Motor neuron (in vitro differentiated cells): ENCODE measurements at regions of chr16 and their contacts with region 1.

Region 1: DNA sequence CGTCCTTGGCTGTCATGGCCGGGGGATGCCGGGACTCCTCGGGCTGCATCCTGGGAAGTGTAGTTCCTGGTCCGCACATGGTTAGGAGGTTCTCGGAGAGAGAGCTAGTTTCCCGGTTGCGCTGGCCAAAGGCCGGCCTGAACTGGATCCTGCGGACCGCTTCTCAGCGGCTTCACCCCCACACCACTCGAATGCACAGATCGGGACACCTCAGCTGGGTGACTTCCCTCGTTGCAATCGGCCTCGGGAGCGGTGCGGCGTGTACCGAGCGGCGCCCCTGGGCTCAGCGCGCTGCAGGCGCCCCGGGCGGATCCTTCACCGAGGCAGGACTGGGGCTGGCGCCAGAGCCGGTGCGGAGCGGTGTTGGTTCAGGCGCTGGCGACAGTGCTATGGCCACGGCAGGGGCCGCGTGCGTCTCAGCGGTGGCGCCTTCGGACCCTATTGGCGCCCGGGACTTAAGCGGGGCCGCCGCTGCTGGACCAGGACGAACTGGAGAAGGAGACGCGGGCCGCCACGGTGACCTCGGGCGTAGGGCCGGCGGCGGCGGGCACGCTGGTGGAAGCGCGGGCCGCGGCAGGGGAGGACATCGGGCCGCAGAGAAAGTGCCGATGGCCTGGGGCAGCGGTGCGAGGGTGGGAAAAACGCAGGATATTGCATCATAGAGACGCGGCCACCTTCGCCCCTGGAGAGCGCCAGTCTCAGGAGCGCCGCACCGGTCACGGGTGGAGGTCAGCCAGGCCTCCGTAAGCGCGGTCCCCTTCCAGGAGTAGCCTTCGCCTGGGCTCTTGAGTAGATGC is 11.4 kb downstream of the ZNF629 start:
- ATAC-seq: peak; percentile 71 to 91 (median 88)
- H3K4me3 ChIP-seq: peak overlapping the region; percentile 50 to 62 (median 59)
- H3K27ac ChIP-seq: peak overlapping the region; percentile 89 to 94
- H3K4me1 ChIP-seq: peaks cover 20 to 22% of the 10 kb centered on the region in 2 donors

Region 2: DNA sequence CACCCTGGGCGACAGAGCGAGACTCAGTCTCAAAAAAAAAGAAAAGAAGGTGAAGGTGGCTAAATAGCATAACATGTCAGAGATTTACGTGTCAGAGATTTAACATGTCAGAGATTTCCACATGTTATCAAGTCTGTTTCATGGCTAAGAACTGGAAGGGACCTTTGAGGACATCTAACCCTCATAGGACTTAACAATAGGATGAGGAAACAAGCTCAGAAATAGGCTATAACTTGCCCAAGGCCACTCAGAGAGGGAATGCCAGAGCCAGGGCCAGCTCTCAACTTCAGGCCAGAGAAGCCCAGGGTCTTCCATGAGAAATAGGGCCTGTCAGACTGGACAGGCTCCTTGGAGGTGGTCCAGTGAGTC is 38.2 kb after region 1 on chr16:
- in situ Hi-C with region 1: no loop called
- ATAC-seq: no peak
- H3K4me3 ChIP-seq: peak overlapping the region; percentile 8 to 20 (median 10)
- H3K27ac ChIP-seq: peak overlapping the region in 1 of 2 donors; percentile 56
- H3K4me1 ChIP-seq: peaks cover 4 to 5% of the 10 kb centered on the region in 2 donors

Region 3: DNA sequence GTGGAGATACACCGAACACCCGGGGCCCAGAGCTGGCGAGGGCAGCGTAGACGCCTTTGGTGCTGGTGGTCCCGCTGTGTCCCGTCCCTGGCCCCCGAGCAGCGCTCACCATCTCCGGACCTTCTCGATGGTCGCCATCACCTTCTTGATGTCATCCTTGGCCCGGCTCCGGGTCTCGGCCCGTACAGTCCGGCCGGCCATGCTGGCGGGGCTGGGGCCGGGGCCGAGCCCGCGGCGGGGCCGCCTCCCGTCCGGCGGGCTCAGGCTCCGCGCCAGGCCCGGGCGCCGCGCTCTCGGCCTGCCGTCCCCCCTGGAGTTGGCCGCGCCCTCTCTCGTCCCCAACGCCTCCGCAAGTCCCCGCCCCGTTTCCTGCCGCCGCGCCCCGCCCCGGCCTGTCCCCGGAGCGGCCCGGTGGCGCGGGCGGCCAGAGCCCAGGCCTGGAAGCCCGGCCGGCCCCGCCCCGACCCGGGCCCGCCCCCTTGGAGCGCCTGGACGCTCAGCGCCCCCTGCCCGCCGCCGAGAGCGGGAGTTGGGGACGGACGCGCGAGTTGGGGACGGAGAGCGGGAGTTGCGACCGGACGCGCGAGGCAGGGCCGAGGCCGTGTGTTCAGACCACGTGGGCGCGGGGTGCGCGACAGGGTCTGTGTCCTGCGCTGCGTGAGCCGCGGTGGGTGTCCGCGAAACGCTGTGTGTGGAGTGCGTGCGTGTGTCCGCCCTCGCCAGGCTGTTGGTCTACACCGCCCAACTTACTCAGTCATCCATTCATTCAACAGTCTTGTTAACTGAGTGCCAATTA is 118.4 kb after region 1 on chr16 and contains the start of gene BCL7C:
- in situ Hi-C with region 1: loop called in 2 of 9 experiments (anchors 25 kb)
- ATAC-seq: peak; percentile 71 to 86 (median 82)
- H3K4me3 ChIP-seq: peak within 1 kb of the TSS; percentile 63 to 96 (median 68)
- H3K27ac ChIP-seq: peak within 1 kb of the TSS; percentile 68 to 78
- H3K4me1 ChIP-seq: peaks cover 21 to 23% of the 10 kb centered on the region in 2 donors
- total RNA-seq, gene BCL7C: 16.7 to 40.3 (median 20.5) TPM

Region 4: DNA sequence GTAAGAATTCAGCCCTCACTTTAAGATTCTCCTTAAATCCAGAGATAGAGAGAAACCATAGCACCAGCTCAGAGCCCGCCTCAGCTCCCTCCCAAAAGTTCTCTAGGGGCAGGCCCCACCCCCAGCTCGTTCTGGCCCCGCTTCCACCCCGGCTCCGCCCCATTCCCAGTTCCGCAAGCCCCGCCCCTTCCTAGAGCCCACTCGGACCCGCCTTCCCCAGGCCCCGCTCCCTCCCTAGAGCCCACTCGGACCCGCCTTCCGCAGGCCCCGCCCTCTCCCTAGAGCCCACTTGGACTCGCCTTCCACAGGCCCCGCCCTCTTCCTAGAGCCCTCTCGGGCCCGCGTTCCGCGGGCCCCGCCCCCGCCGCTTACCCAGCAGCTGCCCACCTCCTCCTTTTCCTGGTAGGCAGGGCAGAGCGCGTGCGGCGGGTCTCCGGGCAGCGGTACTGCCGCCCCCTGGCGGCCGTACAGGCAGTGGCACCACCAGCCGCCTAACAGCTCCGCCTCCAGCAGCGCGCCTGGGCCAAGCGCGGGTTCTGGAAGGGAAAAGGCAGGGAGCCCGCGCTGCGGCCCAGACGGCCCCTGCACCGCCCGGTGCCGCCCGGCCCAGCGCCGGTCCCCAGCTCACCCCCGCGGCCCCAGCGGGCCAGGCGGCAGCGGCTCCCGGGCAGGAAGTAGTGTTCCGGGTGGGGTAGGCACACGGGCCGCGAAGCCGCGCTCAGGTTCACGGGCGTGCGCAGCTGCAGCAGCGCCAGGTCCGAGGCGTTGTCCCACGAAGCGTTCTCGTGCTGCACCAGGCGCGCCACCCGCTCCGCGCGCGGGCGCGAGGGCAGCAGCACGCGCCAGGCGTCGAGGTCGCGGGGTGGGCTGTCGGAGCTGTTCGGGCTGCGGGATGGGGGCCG is 366.8 kb after region 1 on chr16:
- in situ Hi-C with region 1: no loop called
- ATAC-seq: peak; percentile 80 to 93 (median 90)
- H3K4me3 ChIP-seq: peak overlapping the region; percentile 31 to 40 (median 37)
- H3K27ac ChIP-seq: peak overlapping the region in 1 of 2 donors; percentile 30
- H3K4me1 ChIP-seq: peaks cover 6 to 7% of the 10 kb centered on the region in 2 donors